Activated B cell treated with CpG ODN at 0.5 μM for 24 hours (primary cell): ENCODE measurements at regions of chr1 and their contacts with region 1.

Region 1: DNA sequence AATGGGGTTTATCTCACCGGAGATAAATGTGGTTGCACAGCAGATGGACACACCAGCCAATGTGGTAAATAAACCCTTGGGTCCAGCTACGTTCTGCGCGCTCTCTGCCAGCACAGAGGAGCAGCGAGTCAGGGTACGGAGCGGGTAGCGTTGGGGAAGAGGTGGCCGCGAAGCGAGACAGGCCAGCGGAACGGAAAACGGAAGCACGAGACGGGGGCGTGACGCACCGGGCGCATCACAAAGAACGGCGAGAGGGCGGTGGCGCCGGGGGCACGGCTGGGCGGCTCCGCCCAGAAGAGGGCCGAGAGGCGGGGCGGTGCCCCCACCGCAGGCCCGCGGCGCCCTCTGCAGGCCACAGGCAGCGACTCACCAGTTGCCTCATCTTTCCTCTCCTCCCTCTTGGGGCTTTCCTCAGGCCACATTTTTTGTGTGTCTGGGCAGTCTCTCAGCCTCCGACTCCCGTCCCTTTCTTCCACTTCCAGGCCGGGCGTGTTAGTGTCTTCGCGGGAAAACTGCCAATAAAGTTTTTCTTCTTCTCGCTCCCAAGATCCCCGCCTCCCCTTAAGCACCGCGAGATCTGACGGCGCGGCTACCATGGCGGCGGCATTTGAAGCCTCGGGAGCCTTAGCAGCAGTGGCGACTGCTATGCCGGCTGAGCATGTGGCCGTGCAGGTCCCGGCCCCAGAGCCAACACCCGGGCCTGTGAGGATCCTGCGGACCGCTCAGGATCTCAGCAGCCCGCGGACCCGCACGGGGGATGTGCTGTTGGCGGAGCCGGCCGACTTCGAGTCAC is at the start of gene DDX20:
- DNase-seq: peak; percentile 94
- ATAC-seq: peak; percentile 89
- H3K4me3 Mint-ChIP-seq: peak within 1 kb of the TSS; percentile 97
- H3K27ac Mint-ChIP-seq: peak within 1 kb of the TSS; percentile 96
- H3K4me1 Mint-ChIP-seq: peaks cover 30% of the 10 kb centered on the region
- H3K27me3 Mint-ChIP-seq: no peaks in the 10 kb centered on the region
- CTCF ChIP-seq: peak; percentile 55
- total RNA-seq, gene DDX20: 21.5 and 22.4 TPM in 2 replicates

Region 2: GRCh38 chr1:110963691-110964399 is 791.7 kb before region 1 on chr1 and contains the start of gene LRIF1:
- CTCF ChIA-PET with region 1: no interaction called
- POLR2A ChIA-PET with region 1: interaction called, 4 read pairs
- intact Hi-C with region 1: loop called (anchors 5 kb)
- DNase-seq: peak; percentile 99
- ATAC-seq: peak; percentile 97
- H3K4me3 Mint-ChIP-seq: peak within 1 kb of the TSS; percentile 84
- H3K27ac Mint-ChIP-seq: peak within 1 kb of the TSS; percentile 91
- H3K4me1 Mint-ChIP-seq: peaks cover 38% of the 10 kb centered on the region
- H3K27me3 Mint-ChIP-seq: peaks cover 10% of the 10 kb centered on the region
- CTCF ChIP-seq: no peak
- total RNA-seq, gene LRIF1: 16.7 and 17.0 TPM in 2 replicates

Region 3: DNA sequence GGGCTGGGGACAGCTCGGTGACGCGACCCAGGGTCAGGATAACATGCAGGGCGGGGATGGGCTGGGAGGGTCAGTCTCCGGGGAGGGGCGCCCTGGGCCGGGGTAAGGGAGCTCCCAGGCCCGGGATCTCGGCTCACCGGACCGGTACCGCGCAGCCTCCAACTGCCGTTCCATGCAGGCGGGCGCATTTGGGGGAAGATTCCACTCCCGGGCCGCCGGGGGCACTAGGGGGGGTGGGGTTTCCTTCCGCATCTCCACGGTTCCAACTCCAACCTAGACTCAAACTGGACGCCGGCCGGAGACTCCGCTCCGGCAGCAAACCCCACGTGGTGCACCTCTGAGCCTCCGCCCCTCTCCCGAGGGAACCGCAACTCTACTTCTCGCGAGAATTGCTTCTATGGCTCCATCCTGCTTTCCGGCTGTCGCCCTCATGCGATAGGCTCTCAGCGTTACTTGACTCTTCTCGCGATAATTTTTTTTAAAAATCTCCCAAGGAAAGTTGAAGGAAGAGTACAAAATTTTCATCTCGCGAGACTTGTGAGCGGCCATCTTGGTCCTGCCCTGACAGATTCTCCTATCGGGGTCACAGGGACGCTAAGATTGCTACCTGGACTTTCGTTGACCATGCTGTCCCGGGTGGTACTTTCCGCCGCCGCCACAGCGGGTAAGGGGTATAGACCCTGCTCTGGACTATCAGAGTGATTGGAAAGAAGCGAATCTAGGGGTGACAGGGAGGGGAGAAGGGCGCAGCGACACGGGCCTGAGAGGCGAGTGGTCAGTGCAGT is 306.4 kb before region 1 on chr1 and contains the starts of genes ATP5PB and WDR77:
- CTCF ChIA-PET with region 1: no interaction called
- POLR2A ChIA-PET with region 1: no interaction called
- intact Hi-C with region 1: loop called (anchors 1 kb)
- DNase-seq: peak; percentile 77
- ATAC-seq: peak; percentile 96
- H3K4me3 Mint-ChIP-seq: peak within 1 kb of the TSS; percentile 100
- H3K27ac Mint-ChIP-seq: peak within 1 kb of the TSS; percentile 98
- H3K4me1 Mint-ChIP-seq: peaks cover 71% of the 10 kb centered on the region
- H3K27me3 Mint-ChIP-seq: no peaks in the 10 kb centered on the region
- CTCF ChIP-seq: no peak
- total RNA-seq, gene ATP5PB: 220 and 229 TPM in 2 replicates
- total RNA-seq, gene WDR77: 55.8 and 63.3 TPM in 2 replicates

Region 4: DNA sequence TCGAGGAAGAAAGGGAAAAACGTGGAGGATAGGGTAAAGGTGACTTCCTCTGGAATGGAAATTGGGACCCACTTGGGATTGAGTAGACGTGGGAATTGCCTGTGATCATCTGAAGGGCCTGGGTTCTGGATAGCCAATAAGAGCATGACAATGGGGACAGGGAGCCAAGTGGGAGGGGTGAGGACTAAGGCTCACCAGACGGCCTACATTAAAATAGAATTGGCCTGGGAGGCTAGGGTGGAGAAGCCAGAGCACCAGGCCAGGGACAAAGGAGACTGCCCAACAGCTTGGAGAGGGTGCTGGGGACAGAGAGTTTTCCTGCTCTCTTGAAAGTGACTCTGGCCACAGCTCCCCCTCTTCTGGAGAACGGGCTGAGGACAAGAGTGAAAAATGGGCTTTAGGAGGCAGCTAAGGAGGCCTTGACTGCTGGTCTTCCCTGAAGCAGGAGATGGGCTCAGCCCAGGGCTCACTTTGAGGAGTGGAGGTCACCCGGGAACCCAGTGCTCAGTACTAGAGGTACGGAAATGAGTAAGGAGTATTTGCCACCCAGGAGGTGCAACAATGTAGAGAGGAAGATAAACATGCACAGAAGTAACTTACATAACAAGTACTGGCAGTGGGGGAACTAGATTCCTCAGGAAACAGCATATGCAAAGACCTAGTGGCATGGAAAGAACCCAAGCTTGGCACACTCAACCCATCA is 35.1 kb before region 1 on chr1:
- CTCF ChIA-PET with region 1: interaction called, 18 read pairs
- POLR2A ChIA-PET with region 1: interaction called, 3 read pairs
- intact Hi-C with region 1: loop called (anchors 1 kb)
- DNase-seq: no peak
- ATAC-seq: no peak
- H3K4me3 Mint-ChIP-seq: no peak overlapping the region
- H3K27ac Mint-ChIP-seq: no peak overlapping the region
- H3K4me1 Mint-ChIP-seq: peaks cover 21% of the 10 kb centered on the region
- H3K27me3 Mint-ChIP-seq: no peaks in the 10 kb centered on the region
- CTCF ChIP-seq: no peak

Region 5: GRCh38 chr1:111769517-111770146 is 14.1 kb after region 1 on chr1:
- CTCF ChIA-PET with region 1: interaction called, 6 read pairs
- POLR2A ChIA-PET with region 1: interaction called, 6 read pairs
- intact Hi-C with region 1: loop called (anchors 1 kb)
- DNase-seq: no peak
- ATAC-seq: peak; percentile 58
- H3K4me3 Mint-ChIP-seq: no peak overlapping the region
- H3K27ac Mint-ChIP-seq: no peak overlapping the region
- H3K4me1 Mint-ChIP-seq: no peaks in the 10 kb centered on the region
- H3K27me3 Mint-ChIP-seq: no peaks in the 10 kb centered on the region
- CTCF ChIP-seq: no peak